GM23248 (cell line): ENCODE measurements at regions of chr16 and their contacts with region 1.

Region 1: DNA sequence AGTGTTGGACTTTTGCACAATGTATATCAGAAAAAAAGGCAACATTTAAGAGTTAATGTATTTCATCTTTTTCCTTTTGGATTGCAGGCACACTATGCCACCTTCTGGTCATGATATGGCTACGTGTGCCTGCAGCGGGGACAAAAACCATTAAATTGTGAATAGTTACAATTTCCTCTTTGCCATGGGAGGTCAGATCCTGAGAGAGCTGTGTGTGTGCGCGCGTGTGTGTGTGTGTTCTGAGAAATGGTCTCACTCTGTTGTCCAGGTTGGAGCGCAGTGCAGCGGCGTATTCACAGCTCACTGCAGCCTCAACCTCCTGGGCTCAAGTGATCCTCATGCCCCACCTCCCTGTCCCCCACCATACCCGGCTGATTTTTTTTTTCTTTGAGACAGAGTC is 4.3 kb upstream of the SGF29 start:
- DNase-seq: peak; percentile 68
- H3K4me3 ChIP-seq: no peak overlapping the region
- H3K27ac ChIP-seq: no peak overlapping the region
- H3K4me1 ChIP-seq: peaks cover 1% of the 10 kb centered on the region; the same call in 1 of the 2 replicates
- H3K27me3 ChIP-seq: no peaks in the 10 kb centered on the region; the same call in 1 of the 2 replicates

Region 2: GRCh38 chr16:28924732-28925385 is 375.5 kb after region 1 on chr16 and contains the start of gene RABEP2:
- in situ Hi-C with region 1: loop called (anchors 25 kb)
- DNase-seq: peak; percentile 94
- H3K4me3 ChIP-seq: peak within 1 kb of the TSS; percentile 85
- H3K27ac ChIP-seq: peak within 1 kb of the TSS; percentile 89
- H3K4me1 ChIP-seq: no peaks in the 10 kb centered on the region
- H3K27me3 ChIP-seq: no peaks in the 10 kb centered on the region
- total RNA-seq, gene RABEP2: 34.7 and 53.4 TPM in 2 replicates